Caki2 (cell line): ENCODE measurements at regions of chr20 and their contacts with region 1.

Region 1: GRCh38 chr20:43942661-43943290 is 28.1 kb downstream of the TOX2 start:
- DNase-seq: peak; percentile 55

Region 2: GRCh38 chr20:43994486-43995100 is 51.8 kb after region 1 on chr20:
- in situ Hi-C with region 1: loop called (anchors 10 kb)
- DNase-seq: no peak

Region 3: GRCh38 chr20:44542890-44543289 is 600.1 kb after region 1 on chr20:
- in situ Hi-C with region 1: no loop called
- DNase-seq: no peak